ENCODE measurements at regions of chr1 and their contacts with region 1.

Region 1: DNA sequence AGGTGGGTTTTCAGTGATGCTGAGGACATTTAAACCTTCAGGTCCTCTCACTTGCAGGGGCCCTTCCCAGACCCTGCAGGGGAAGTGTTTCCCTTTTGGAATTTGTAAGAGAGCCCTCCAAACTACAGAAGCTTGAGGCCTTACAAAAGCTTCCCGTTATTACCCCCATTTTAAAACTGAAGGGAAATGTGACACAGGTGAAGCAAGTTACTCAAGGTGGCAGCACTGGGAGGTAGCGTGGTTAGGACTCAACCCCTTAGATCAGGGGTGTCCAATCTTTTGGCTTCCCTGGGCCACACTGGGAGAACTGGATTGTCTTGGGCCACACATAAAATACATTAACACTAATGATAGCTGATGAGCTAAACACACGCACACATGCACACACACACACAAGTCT is 15.9 kb upstream of the ZC3H12A start:
- DNase-seq: no peak
- ATAC-seq: peak; percentile 48
- H3K4me3 ChIP-seq: no peak overlapping the region
- H3K27ac ChIP-seq: no peak overlapping the region
- H3K4me1 ChIP-seq: peaks cover 3 to 17% of the 10 kb centered on the region in 2 experiments; a peak in 3 of 4 replicates
- H3K27me3 ChIP-seq: no peaks in the 10 kb centered on the region
- CTCF ChIP-seq: peak in 2 of 3 experiments; percentile 39 to 60; a peak in 3 of 6 replicates
- POLR2A ChIP-seq: no peak
- RAD21 ChIP-seq: peak; percentile 64

Region 2: GRCh38 chr1:37561133-37562132 is 102.9 kb after region 1 on chr1:
- CTCF ChIA-PET with region 1: no interaction called
- POLR2A ChIA-PET with region 1: no interaction called
- RAD21 ChIA-PET with region 1: no interaction called
- intact Hi-C with region 1: loop called (anchors 5 kb)
- DNase-seq: peak; percentile 35
- ATAC-seq: peak; percentile 88
- H3K4me3 ChIP-seq: no peak overlapping the region
- H3K27ac ChIP-seq: no peak overlapping the region
- H3K4me1 ChIP-seq: peaks cover 5% of the 10 kb centered on the region in 2 experiments
- H3K27me3 ChIP-seq: no peaks in the 10 kb centered on the region
- CTCF ChIP-seq: peak; percentile 62 to 90 (median 89)
- POLR2A ChIP-seq: no peak
- RAD21 ChIP-seq: peak; percentile 84

Region 3: DNA sequence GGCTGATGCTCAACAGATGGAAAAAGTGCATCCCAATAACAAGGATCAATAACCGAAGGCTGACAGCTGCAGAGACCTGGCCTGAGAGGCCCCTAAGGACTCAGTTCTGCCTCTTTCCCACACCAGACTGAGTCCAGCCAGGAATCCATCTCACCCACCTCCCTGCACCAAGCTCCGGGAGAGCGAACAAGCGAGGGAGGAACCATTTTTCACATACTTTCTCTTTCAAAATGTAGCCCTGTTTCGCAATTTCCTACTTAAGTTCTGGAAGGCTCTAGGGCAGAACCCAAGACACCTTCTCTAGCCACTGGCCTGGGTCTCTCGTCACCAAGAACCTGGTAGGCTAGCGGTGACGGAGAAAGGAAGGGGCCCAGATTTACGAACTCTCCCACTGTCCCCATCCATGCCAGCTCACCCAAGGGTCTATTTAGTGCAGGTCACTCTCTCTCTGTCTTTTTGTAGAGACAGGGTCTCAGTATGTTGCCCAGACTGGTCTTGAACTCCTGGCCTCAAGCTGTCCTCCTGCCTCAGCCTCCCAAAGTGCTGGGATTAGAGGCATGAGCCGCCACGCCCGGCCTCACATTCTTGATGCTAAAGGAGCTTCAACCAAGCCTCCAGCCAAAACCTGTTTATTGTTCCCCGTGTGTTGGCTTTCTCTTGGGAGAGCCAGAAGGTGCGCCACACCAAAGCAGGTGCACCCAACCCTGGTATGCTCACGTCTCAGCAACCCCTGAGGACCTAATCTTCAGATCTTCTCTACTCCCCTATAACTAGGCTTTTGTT is 148.1 kb after region 1 on chr1:
- CTCF ChIA-PET with region 1: no interaction called
- POLR2A ChIA-PET with region 1: no interaction called
- RAD21 ChIA-PET with region 1: no interaction called
- intact Hi-C with region 1: no loop called
- DNase-seq: no peak
- ATAC-seq: no peak
- H3K4me3 ChIP-seq: no peak overlapping the region
- H3K27ac ChIP-seq: no peak overlapping the region
- H3K4me1 ChIP-seq: no peaks in the 10 kb centered on the region
- H3K27me3 ChIP-seq: peaks cover 46% of the 10 kb centered on the region
- CTCF ChIP-seq: no peak
- POLR2A ChIP-seq: no peak
- RAD21 ChIP-seq: no peak